PC-9 (cell line): ENCODE measurements at regions of chrX and their contacts with region 1.

Region 1: GRCh38 chrX:134622813-134623185 is 35.5 kb downstream of the PLAC1 start:
- DNase-seq: no peak
- H3K4me3 ChIP-seq: no peak overlapping the region
- H3K27ac ChIP-seq: no peak overlapping the region
- H3K4me1 ChIP-seq: peaks cover 33% of the 10 kb centered on the region
- H3K27me3 ChIP-seq: no peaks in the 10 kb centered on the region
- CTCF ChIP-seq: no peak

Region 2: GRCh38 chrX:134580907-134581306 is 41.9 kb before region 1 on chrX:
- CTCF ChIA-PET with region 1: no interaction called
- POLR2A ChIA-PET with region 1: interaction called, 16 read pairs
- intact Hi-C with region 1: no loop called
- DNase-seq: no peak
- H3K4me3 ChIP-seq: no peak overlapping the region
- H3K27ac ChIP-seq: no peak overlapping the region
- H3K4me1 ChIP-seq: peaks cover 25% of the 10 kb centered on the region
- H3K27me3 ChIP-seq: no peaks in the 10 kb centered on the region
- CTCF ChIP-seq: no peak

Region 3: GRCh38 chrX:134661295-134661694 is 38.5 kb after region 1 on chrX:
- CTCF ChIA-PET with region 1: no interaction called
- POLR2A ChIA-PET with region 1: no interaction called
- intact Hi-C with region 1: no loop called
- DNase-seq: peak in 1 of 2 experiments; percentile 49
- H3K4me3 ChIP-seq: no peak overlapping the region
- H3K27ac ChIP-seq: peak overlapping the region; percentile 23; the same call in 1 of the 2 replicates
- H3K4me1 ChIP-seq: peaks cover 34% of the 10 kb centered on the region
- H3K27me3 ChIP-seq: no peaks in the 10 kb centered on the region
- CTCF ChIP-seq: no peak